ENCODE measurements at regions of chr1 and their contacts with region 1.

Region 1: DNA sequence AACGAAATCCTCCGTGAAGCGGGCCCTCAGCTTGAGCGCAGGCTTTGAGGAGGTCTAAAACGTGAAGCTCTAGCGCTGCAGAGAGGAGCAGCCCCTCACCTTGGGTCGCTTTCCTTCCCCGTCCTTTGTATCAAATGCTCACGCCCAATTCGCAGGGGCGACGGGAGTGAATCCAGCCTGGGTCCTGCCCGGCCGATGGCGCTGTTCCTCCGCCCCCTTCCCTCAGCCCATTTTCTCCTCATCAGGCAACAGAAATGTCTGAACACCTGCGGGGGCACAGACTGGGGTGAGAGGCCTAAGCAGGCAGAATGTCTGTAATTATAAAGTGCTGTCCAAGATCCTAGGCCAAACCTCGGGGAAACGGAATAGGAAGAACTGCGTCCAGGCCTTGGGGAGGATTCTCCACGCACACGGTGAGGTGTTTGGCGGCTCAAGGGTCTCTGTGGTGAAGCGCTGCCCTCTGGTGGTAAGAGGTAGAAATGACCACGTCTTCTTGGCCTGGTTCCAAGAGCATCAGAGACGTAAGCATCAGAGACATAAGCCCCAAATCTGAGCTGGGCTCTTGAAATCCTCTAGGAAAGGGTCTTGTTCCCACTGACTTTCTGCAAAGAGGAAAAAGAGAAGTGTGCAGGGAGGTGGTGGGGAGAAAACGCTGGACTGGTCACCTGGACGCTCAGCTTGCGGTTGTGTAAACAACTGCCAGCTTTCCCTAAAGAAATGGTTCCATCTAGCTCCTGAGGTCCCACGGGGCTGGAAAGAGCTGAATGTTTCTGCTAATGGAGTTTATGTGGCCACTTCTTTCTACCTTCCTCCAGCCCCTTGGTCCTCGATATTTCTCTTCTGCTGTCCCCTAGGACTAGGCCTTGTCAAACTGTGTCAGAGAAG is 92.1 kb upstream of the CD53 start:
- DNase-seq: peak; percentile 79
- CTCF ChIP-seq: peak; percentile 79

Region 2: GRCh38 chr1:110524311-110525251 is 256.3 kb before region 1 on chr1:
- CTCF ChIA-PET with region 1: interaction called, 53 read pairs
- POLR2A ChIA-PET with region 1: no interaction called
- DNase-seq: peak; percentile 72
- CTCF ChIP-seq: peak; percentile 63

Region 3: DNA sequence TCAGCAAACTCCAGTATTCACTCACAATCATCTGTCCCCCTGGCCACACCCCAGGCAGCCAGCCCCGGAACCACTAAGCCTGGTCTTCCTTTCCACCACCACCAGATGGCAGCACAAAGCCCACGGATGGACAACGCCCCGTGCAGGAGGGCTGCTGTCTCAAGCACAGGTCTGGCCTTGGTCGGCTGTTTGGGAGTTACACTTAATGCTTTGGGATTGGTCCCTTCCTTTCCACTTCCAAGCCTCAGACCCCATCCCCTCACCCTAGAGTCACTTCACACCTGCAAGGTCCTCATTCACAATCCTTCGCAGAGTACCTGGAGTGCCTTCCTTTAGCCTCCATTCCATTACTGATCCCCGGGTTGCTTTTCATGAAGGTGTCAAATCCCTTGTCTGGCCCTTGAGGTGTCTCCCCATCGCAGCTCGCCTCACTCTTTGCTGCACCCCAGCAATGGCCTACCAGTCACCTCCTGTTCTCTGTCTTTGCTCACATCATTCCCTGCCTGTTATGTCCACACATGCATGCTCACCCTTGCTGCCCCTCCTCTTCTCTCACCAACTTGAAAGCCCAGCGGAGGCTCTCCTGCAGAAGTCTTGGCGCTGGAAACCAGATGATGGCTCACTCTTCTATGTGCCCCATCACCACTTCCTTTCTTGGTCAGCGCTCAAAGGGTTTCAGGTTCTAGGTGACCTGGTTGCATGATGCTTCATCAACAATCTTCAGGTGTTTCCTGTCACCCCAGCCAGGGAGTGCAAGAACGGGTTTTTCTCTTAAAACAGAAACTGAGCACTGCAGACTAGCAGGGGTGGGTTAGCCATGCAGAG is 149.8 kb before region 1 on chr1:
- CTCF ChIA-PET with region 1: interaction called, 56 read pairs
- POLR2A ChIA-PET with region 1: no interaction called
- DNase-seq: peak; percentile 67
- CTCF ChIP-seq: peak; percentile 75

Region 4: GRCh38 chr1:110800079-110800478 is 19.2 kb after region 1 on chr1:
- CTCF ChIA-PET with region 1: interaction called, 35 read pairs
- POLR2A ChIA-PET with region 1: no interaction called
- DNase-seq: no peak
- CTCF ChIP-seq: no peak

Region 5: GRCh38 chr1:111030590-111030989 is 249.7 kb after region 1 on chr1:
- CTCF ChIA-PET with region 1: interaction called, 12 read pairs
- POLR2A ChIA-PET with region 1: no interaction called
- DNase-seq: peak; percentile 50
- CTCF ChIP-seq: peak; percentile 87